GM10248 (cell line): ENCODE measurements at regions of chr10 and their contacts with region 1.

Region 1: DNA sequence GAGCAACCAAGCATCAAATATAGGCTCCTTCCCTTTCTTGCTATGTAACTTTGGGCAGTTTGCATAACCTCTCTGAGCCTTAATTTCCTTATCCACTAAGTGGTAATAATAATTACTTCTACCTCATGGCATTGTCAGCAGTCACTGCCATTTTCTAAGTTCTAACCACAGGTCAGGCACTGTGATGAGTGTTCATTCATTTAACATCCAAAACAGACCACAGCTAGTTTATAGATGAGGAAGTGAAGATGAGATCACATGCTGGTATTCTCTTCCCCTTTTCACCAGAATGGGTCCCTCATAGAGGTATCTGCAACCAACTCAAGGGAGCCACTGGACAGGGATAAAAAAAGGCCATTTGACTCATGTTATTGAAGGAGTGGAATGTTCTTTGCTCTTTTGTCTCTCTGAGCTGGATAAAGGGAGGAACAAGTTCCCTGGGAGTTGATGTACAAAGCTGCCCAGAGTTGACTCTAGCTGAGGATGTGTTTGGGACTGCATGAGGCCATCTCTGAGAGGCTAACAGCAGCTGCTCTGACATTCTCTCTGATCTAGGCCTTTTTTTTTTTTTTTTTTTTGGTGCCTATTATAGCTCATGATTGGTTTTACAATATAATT is 65.0 kb downstream of the DNAJC12 start:
- DNase-seq: peak; percentile 71
- CTCF ChIP-seq: no peak

Region 2: DNA sequence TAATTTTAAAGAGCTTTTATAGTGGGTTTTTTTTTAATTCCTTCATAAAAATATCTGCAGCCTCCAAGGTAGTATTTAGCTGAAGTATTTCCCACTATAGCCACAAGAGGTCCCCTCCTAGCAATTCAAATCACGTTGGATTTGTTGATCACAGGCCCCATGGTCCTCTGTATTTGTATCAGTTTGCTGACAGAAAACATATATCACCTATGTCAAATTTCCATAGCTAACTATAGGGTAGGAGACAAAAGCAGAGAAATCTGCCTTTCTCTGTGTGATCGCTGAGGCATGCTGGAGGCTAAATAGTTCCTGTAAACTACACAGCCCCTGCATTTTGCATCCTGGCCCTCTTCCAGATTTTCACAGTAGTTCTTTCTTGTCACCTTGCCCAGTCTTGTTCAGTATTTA is 75.3 kb before region 1 on chr10:
- CTCF ChIA-PET with region 1: interaction called, 208 read pairs
- POLR2A ChIA-PET with region 1: no interaction called
- DNase-seq: peak; percentile 44
- CTCF ChIP-seq: peak; percentile 54

Region 3: DNA sequence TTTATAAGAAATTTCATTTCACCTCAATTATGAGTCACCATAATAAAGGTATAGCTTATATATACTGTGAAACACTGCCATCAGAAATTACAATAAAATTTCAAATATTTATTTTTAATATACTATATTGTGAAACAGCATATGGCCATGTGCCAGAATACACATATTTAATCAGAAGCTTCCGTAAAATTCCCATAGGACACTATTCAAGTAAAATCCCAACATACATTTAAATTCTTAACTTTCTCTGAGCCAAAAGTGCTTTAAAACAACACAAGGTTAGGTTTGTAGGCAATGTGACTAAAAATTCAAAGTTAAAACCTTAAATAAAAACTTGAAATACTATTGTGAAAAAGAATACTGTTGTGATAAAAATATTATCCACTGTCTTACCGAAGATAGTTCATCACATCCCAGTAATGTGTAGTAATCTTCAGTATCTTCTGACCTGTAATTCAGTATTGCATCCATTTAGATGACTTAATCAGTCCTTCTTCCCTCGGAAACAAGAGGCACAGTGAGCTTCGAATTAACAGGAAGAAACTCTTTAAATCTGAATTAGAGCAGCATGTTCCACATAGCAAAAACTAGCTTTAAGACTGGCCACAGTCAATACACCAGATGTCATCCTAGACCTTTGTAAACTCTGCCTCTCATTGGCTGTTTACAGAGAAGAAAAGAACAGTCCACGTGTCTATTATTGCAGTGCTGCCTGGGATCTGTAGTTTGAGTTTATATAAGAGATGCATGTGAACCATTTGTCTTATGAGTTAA is 64.7 kb after region 1 on chr10 and contains the start of gene DNAJC12:
- CTCF ChIA-PET with region 1: no interaction called
- POLR2A ChIA-PET with region 1: no interaction called
- DNase-seq: peak; percentile 19
- CTCF ChIP-seq: no peak